Activated naive CD4-positive, alpha-beta T cell treated with anti-CD3 and anti-CD28 coated beads for 36 hours (primary cell): ENCODE measurements at regions of chr14 and their contacts with region 1.

Region 1: DNA sequence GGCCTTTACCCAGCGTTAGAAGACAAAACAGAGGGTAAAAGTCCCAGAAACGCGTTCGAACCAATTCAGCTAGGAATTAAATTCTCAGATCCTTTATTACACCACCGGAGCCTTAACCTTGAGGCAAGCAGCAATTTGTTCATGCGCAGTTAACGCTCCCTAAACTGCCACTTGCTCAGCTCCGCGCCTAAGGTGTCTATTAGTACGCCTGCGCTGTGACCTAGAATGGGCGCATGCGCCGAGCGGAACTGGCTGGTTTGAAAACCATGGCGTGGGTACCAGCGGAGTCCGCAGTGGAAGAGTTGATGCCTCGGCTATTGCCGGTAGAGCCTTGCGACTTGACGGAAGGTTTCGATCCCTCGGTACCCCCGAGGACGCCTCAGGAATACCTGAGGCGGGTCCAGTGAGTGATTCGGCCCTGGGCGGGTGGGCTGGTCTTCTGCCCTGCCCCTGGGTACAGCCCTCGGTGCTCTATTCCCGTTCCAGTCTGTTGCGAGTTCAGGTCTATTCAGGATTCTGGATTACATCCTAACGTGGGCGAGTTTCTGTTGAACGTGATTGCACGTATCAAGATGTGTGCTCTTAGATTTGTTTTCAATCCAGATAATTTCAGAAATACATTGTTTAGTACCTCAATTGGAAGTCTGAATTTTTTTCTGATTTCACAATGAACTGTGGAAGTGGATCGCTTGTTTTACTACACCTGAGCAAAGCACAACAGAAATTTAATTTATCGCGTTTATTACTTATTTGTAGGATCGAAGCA is at the start of gene GEMIN2:
- DNase-seq: peak; percentile 96
- H3K4me3 Mint-ChIP-seq: peak within 1 kb of the TSS; percentile 94
- H3K27ac Mint-ChIP-seq: peak within 1 kb of the TSS; percentile 90
- H3K4me1 Mint-ChIP-seq: peaks cover 23% of the 10 kb centered on the region
- H3K27me3 Mint-ChIP-seq: no peaks in the 10 kb centered on the region
- total RNA-seq, gene GEMIN2: 20.7 to 22.7 TPM

Region 2: GRCh38 chr14:38808734-38809462 is 305.4 kb before region 1 on chr14:
- CTCF ChIA-PET with region 1: no interaction called
- intact Hi-C with region 1: no loop called
- DNase-seq: peak; percentile 9
- H3K4me3 Mint-ChIP-seq: no peak overlapping the region
- H3K27ac Mint-ChIP-seq: no peak overlapping the region
- H3K4me1 Mint-ChIP-seq: no peaks in the 10 kb centered on the region
- H3K27me3 Mint-ChIP-seq: no peaks in the 10 kb centered on the region

Region 3: GRCh38 chr14:39085933-39086332 is 28.3 kb before region 1 on chr14:
- CTCF ChIA-PET with region 1: no interaction called
- intact Hi-C with region 1: no loop called
- DNase-seq: no peak
- H3K4me3 Mint-ChIP-seq: no peak overlapping the region
- H3K27ac Mint-ChIP-seq: no peak overlapping the region
- H3K4me1 Mint-ChIP-seq: peaks cover 17% of the 10 kb centered on the region
- H3K27me3 Mint-ChIP-seq: no peaks in the 10 kb centered on the region

Region 4: DNA sequence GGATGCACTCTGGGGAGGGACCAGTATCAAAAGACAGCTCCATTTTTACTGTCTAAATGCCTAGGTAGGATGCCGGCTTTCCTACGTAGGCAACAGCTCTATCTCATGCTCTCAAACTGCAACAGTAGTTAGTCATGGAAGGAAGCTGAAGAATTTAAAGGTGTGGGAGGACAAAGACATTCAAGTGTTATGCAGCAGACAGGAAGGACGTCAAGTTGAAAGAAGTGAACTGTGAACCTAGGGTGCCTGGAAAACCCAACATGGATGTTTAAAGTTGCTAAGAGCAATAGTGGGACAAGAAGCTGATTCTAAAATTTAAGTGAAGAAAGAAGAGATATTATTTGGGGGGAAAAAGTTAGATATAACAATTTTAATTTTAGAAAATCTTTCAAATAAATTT is 17.1 kb before region 1 on chr14:
- CTCF ChIA-PET with region 1: no interaction called
- intact Hi-C with region 1: loop called (anchors 2 kb)
- DNase-seq: peak; percentile 63
- H3K4me3 Mint-ChIP-seq: no peak overlapping the region
- H3K27ac Mint-ChIP-seq: peak overlapping the region; percentile 82
- H3K4me1 Mint-ChIP-seq: peaks cover 46% of the 10 kb centered on the region
- H3K27me3 Mint-ChIP-seq: no peaks in the 10 kb centered on the region

Region 5: DNA sequence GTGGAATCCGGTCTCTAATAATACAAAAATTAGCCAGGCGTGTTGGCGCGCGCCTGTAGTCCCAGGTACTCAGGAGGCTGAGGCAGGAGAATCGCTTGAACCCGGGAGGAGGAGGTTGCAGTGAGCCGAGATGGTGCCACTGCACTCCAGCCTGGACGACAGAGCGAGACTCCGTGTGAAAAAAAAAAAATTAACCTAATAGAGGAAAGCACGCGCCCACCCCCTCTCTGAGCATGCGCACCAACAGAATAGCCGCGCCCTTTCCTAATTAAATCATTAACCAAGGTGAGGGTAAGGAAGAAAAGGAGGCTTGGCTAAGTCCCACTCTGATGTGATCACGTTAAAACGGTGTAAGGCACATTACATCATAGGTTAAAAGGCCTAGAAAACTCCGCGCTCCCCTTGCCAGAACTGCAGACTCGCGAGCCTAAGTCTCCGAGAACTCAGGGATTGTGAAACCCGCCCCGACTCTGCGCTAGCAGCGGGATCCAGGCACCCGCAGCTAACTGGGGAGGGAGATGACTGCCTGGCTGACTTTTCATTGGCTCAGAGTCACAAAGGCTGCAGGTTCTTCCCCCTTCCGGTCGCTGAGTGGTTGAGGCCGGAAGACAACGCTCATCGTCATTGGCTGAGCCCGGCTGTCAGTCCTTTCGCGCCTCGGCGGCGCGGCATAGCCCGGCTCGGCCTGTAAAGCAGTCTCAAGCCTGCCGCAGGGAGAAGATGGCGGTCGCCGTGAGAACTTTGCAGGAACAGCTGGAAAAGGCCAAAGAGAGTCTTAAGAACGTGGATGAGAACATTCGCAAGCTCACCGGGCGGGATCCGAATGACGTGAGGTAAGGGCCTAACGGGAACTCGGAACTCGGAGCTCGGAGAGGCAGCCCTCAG is 60.5 kb after region 1 on chr14 and contains the start of gene PNN:
- CTCF ChIA-PET with region 1: interaction called, 3 read pairs
- intact Hi-C with region 1: loop called (anchors 1 kb)
- DNase-seq: peak; percentile 98
- H3K4me3 Mint-ChIP-seq: peak within 1 kb of the TSS; percentile 100
- H3K27ac Mint-ChIP-seq: peak within 1 kb of the TSS; percentile 100
- H3K4me1 Mint-ChIP-seq: peaks cover 44% of the 10 kb centered on the region
- H3K27me3 Mint-ChIP-seq: no peaks in the 10 kb centered on the region
- total RNA-seq, gene PNN: 99.6 to 100 TPM

Region 6: DNA sequence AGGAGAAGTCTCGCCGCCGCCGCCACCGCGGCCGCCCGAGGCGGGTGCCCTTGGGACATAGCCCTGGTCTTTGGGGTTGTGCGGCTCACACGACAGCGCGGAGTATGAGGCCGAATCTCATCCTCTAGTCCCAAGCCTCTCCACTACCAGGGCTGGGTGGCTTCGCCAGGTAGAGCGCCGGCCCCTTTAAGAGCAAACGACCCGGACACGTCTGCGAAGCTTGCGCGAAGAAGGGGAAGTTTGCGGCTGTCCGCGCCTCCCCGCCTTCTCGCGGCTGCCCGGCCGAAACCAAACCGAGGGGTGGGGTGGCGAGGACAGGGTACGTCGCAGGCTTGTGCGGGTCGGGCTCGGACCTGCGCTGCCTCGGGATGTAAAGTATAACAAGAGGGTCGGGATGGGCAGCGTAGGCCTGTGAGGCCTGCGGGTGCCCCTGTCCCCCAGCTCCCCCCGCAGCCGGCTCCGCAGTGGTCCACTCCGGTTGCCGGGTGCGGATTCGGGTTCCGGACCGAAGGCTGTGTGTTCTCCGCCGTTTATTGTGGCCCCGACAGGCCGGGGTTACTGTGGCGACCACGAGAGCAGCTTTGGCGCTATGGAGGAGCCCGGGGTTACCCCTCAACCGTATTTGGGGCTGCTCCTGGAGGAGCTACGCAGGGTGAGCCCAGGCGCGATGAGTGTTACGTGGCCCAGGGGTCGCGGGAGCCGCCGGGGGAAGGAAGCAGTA is 152.8 kb after region 1 on chr14:
- CTCF ChIA-PET with region 1: interaction called, 3 read pairs
- intact Hi-C with region 1: loop called (anchors 1 kb)
- DNase-seq: peak; percentile 68
- H3K4me3 Mint-ChIP-seq: peak overlapping the region; percentile 72
- H3K27ac Mint-ChIP-seq: peak overlapping the region; percentile 93
- H3K4me1 Mint-ChIP-seq: peaks cover 48% of the 10 kb centered on the region
- H3K27me3 Mint-ChIP-seq: no peaks in the 10 kb centered on the region